Common myeloid progenitor, CD34-positive (primary cell): ENCODE measurements at regions of chr2 and their contacts with region 1.

Region 1: GRCh38 chr2:74458132-74458925 is at the start of gene WBP1:
- DNase-seq: peak; percentile 100
- H3K4me3 ChIP-seq: peak within 1 kb of the TSS; percentile 49 to 98 (median 84)
- H3K27ac ChIP-seq: peak within 1 kb of the TSS; percentile 88 to 94
- H3K4me1 ChIP-seq: peaks cover 6 to 48% (median 33%) of the 10 kb centered on the region in 4 experiments
- H3K27me3 ChIP-seq: no peaks in the 10 kb centered on the region

Region 2: DNA sequence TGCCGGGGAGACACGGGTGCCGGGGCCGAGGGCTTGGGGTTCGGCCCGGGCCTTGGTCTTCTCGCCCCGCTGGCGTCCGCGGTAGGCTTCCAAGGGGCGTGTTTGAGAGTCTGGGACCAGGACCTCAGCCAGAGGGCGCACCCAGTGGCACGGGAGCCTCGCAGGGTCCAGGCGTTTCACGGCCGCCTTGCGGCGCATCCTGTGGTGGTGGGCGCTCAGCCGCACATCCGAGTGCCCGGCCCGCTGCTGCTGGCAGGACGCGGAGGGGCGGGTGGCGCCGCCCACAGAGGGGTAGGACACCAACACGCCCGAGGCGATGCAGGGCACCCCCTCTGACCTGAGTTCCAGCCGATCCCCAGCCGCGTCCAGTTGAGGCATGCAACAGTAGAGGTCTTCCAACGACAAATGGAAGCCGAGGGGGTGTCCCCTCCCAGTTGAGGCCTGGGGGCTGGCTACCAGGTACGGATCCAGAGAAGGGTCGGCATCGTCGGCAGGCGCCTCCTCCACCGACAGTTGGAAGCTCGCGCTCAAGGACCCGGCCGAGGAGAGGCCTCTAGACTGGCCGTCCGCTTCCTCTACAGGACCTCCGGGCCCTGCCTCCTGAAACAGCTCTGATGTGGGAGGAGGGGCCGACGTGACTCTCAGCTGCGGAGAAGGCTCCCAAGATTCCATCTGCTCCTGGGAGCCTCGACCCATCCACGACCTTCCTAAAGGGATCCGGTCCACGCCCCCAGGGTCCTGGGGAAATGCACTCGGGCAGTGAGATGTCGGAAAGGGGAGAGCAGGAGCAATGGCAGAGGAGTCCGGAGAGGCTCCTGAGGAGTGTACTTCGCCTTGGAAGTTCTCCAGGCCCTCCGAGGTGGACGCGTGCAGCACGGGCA is 43.2 kb before region 1 on chr2:
- CTCF ChIA-PET with region 1: interaction called, 10 read pairs
- POLR2A ChIA-PET with region 1: interaction called, 3 read pairs
- DNase-seq: peak; percentile 46 to 62 (median 51)
- H3K4me3 ChIP-seq: peak overlapping the region in 6 of 7 experiments; percentile 10 to 82 (median 64)
- H3K27ac ChIP-seq: no peak overlapping the region
- H3K4me1 ChIP-seq: peaks cover 0 to 33% (median 25%) of the 10 kb centered on the region in 4 experiments
- H3K27me3 ChIP-seq: peaks cover 0 to 7% (median 0%) of the 10 kb centered on the region in 5 experiments

Region 3: DNA sequence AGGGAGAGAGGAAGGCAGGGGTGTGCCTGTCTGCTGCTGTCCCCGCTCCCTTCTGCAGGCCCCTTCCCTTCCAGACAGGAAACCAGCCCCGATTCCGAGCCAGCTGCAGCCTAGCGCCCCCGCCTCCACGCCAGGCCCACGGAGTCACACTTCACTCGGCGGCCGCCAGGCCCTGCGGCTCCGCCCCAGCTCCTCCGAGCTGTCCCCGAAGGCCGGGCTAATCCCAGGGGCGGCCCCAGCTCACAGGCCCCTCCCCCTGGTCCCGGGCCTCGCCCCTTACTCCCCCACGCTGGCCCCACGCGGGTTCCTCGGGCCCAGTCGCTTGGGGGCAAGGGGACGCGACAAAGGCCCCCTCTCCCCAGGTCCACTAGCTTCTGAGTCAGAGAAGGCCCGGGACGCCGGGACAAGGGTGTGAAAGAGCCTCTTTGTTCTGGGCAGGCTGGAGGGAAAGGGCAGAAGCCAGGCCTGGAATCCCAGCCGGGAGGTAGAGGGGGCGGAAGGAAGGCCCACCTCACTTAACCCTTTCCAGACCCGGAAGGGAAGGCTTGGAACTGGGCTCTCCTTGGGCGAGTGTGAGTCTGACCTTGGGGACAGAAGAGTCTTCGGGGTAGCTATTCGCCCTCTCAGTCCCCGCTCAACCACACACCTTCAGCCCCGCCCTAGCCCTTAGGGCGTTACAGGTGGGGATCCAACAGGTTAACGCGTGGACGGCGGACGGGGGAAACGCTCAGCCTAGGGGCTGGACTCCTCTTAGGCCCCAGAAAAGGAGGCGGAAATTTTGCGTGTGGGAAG is 17.8 kb before region 1 on chr2:
- CTCF ChIA-PET with region 1: interaction called, 14 read pairs
- POLR2A ChIA-PET with region 1: interaction called, 10 read pairs
- DNase-seq: peak; percentile 71 to 88 (median 83)
- H3K4me3 ChIP-seq: peak overlapping the region; percentile 2 to 84 (median 71)
- H3K27ac ChIP-seq: no peak overlapping the region
- H3K4me1 ChIP-seq: peaks cover 4 to 51% (median 44%) of the 10 kb centered on the region in 4 experiments
- H3K27me3 ChIP-seq: peaks cover 0 to 27% (median 10%) of the 10 kb centered on the region in 5 experiments

Region 4: GRCh38 chr2:74472086-74472944 is 14.0 kb after region 1 on chr2 and contains the start of gene MRPL53:
- CTCF ChIA-PET with region 1: interaction called, 12 read pairs
- POLR2A ChIA-PET with region 1: interaction called, 12 read pairs
- DNase-seq: peak; percentile 98 to 99 (median 99)
- H3K4me3 ChIP-seq: peak within 1 kb of the TSS; percentile 40 to 93 (median 87)
- H3K27ac ChIP-seq: peak within 1 kb of the TSS; percentile 78 to 84
- H3K4me1 ChIP-seq: peaks cover 7 to 35% (median 21%) of the 10 kb centered on the region in 4 experiments
- H3K27me3 ChIP-seq: no peaks in the 10 kb centered on the region